GM12878 (cell line): ENCODE measurements at regions of chr12 and their contacts with region 1.

Region 1: GRCh38 chr12:121678716-121679580 is 9.5 kb upstream of the MORN3 start:
- DNase-seq: no peak
- ATAC-seq: no peak
- H3K4me3 ChIP-seq: no peak overlapping the region
- H3K27ac ChIP-seq: no peak overlapping the region
- H3K4me1 ChIP-seq: no peaks in the 10 kb centered on the region
- H3K27me3 ChIP-seq: no peaks in the 10 kb centered on the region
- CTCF ChIP-seq: no peak
- EP300 ChIP-seq: no peak
- POLR2A ChIP-seq: no peak
- RAD21 ChIP-seq: no peak

Region 2: DNA sequence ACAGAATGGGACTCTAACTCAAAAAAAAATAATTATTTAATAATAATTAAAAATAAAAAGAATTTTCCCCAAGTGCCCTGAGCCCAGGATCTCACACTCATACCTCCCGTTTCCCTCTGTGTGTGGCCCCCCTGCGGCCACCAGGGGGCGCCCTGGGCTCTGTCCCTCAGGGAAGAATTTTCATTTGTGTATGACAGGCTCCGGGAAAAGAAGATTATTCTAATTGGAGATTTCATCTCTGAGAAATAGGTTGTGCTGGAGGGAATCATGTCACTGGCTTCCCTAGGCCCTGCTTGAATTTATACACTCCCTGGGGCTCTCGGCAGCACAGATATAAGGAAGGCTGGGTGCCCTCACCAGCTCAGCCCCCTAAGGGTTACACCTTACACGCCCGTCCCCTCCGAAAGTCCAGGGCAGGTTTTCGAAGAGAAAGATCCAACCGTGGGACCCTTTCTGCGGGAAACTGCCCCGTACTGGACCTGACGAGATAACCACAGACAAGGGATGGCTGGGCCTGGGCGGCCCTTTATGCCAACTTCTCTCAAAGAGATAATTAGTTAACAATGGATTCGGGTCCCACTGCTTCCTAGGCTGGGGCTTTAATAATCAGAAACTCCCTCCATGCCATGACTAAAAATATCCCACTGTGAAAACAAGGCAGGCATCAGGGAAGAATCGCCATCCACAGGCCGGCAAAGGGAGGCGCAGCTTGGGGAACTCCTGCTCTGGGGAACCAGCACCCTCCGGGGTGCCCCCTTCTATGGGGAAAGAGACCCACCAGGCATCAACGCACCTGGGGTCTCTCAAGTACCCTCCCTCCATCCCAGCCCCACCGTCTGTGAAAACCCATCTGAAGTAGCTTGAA is 178.8 kb before region 1 on chr12:
- CTCF ChIA-PET with region 1: interaction called, 8 read pairs
- POLR2A ChIA-PET with region 1: interaction called, 6 read pairs
- RAD21 ChIA-PET with region 1: interaction called, 3 read pairs
- SMC1A ChIA-PET with region 1: interaction called, 5 read pairs
- in situ Hi-C with region 1: no loop called
- intact Hi-C with region 1: loop called (anchors 1 kb)
- DNase-seq: no peak
- ATAC-seq: peak; percentile 94
- H3K4me3 ChIP-seq: no peak overlapping the region
- H3K27ac ChIP-seq: no peak overlapping the region
- H3K4me1 ChIP-seq: no peaks in the 10 kb centered on the region
- H3K27me3 ChIP-seq: no peaks in the 10 kb centered on the region
- CTCF ChIP-seq: peak; percentile 85 to 96 (median 91)
- EP300 ChIP-seq: no peak
- POLR2A ChIP-seq: no peak
- RAD21 ChIP-seq: peak; percentile 92